Pancreas (tissue), 10 donors: ENCODE measurements at regions of chr16 and their contacts with region 1.

Region 1: GRCh38 chr16:9275377-9275776 is 183.9 kb downstream of the HAPSTR1 start:
- DNase-seq: no peak
- ATAC-seq: no peak
- H3K4me3 ChIP-seq: no peak overlapping the region
- H3K27ac ChIP-seq: no peak overlapping the region
- H3K4me1 ChIP-seq: no peaks in the 10 kb centered on the region
- H3K27me3 ChIP-seq: no peaks in the 10 kb centered on the region
- CTCF ChIP-seq: no peak

Region 2: GRCh38 chr16:9330095-9330494 is 54.7 kb after region 1 on chr16:
- intact Hi-C with region 1: loop called in 1 of 3 experiments (anchors 10 kb)
- DNase-seq: no peak
- ATAC-seq: peak in 3 of 4 donors; percentile 11 to 54 (median 47)
- H3K4me3 ChIP-seq: no peak overlapping the region
- H3K27ac ChIP-seq: no peak overlapping the region
- H3K4me1 ChIP-seq: no peaks in the 10 kb centered on the region
- H3K27me3 ChIP-seq: no peaks in the 10 kb centered on the region
- CTCF ChIP-seq: no peak

Region 3: GRCh38 chr16:9362050-9362449 is 86.7 kb after region 1 on chr16:
- intact Hi-C with region 1: no loop called
- DNase-seq: no peak
- ATAC-seq: no peak
- H3K4me3 ChIP-seq: no peak overlapping the region
- H3K27ac ChIP-seq: no peak overlapping the region
- H3K4me1 ChIP-seq: peaks cover 27 to 34% (median 28%) of the 10 kb centered on the region in 3 donors
- H3K27me3 ChIP-seq: no peaks in the 10 kb centered on the region
- CTCF ChIP-seq: no peak